B cell (primary cell): ENCODE measurements at regions of chr5 and their contacts with region 1.

Region 1: GRCh38 chr5:18465833-18466591 is 831.8 kb downstream of the TAF11L14 start:
- DNase-seq: peak; percentile 46
- ATAC-seq: peak; percentile 57
- H3K4me3 ChIP-seq: no peak overlapping the region
- H3K4me3 Mint-ChIP-seq: no peak overlapping the region
- H3K27ac ChIP-seq: no peak overlapping the region
- H3K27ac Mint-ChIP-seq: no peak overlapping the region
- H3K4me1 ChIP-seq: no peaks in the 10 kb centered on the region
- H3K4me1 Mint-ChIP-seq: no peaks in the 10 kb centered on the region
- H3K27me3 ChIP-seq: no peaks in the 10 kb centered on the region
- H3K27me3 Mint-ChIP-seq: no peaks in the 10 kb centered on the region
- CTCF ChIP-seq: peak; percentile 88

Region 2: DNA sequence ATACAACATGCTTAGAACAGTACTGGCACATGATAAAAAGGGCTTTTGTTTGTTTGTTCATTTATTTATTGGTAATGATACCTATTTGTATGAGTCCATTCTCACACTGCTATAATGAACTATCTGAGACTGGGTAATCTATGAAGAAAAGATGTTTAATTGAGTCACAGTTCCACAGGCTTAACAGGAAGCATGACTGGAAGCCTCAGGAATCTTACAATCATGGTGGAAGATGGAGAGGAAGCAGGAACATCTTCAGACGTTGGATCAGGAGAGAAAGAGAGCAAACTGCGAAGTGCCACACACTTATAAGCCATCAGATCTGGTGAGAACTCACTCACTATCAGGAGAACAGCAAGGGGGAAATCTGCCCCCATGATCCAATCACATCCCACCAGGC is 674.3 kb after region 1 on chr5:
- CTCF ChIA-PET with region 1: no interaction called
- POLR2A ChIA-PET with region 1: no interaction called
- intact Hi-C with region 1: no loop called
- DNase-seq: no peak
- ATAC-seq: no peak
- H3K4me3 ChIP-seq: no peak overlapping the region
- H3K4me3 Mint-ChIP-seq: no peak overlapping the region
- H3K27ac ChIP-seq: no peak overlapping the region
- H3K27ac Mint-ChIP-seq: no peak overlapping the region
- H3K4me1 ChIP-seq: no peaks in the 10 kb centered on the region
- H3K4me1 Mint-ChIP-seq: no peaks in the 10 kb centered on the region
- H3K27me3 ChIP-seq: no peaks in the 10 kb centered on the region
- H3K27me3 Mint-ChIP-seq: no peaks in the 10 kb centered on the region
- CTCF ChIP-seq: no peak

Region 3: DNA sequence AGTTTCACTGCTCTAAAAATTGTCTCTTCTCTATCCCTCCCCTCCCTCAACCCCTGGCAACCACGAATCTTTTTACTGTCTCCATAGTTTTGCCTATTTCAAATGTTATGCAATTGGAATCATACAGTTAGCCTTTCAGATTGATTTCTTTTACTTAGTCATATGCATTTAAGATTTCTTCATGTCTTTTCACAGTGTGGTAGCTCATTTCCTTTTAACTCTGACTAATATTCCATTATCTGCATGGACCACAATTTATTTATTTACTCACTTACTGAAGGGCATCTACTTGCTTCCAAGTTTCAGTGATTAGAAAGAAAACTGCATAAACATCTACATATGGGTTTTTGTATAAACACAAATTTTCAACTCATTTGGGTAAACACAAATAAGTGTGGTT is 1149.6 kb after region 1 on chr5:
- CTCF ChIA-PET with region 1: no interaction called
- POLR2A ChIA-PET with region 1: no interaction called
- intact Hi-C with region 1: loop called (anchors 10 kb)
- DNase-seq: no peak
- ATAC-seq: no peak
- H3K4me3 ChIP-seq: no peak overlapping the region
- H3K4me3 Mint-ChIP-seq: no peak overlapping the region
- H3K27ac ChIP-seq: no peak overlapping the region
- H3K27ac Mint-ChIP-seq: no peak overlapping the region
- H3K4me1 ChIP-seq: no peaks in the 10 kb centered on the region
- H3K4me1 Mint-ChIP-seq: no peaks in the 10 kb centered on the region
- H3K27me3 ChIP-seq: no peaks in the 10 kb centered on the region
- H3K27me3 Mint-ChIP-seq: no peaks in the 10 kb centered on the region
- CTCF ChIP-seq: no peak